Dorsolateral prefrontal cortex (tissue), 120 donors: ENCODE measurements at regions of chr4 and their contacts with region 1.

Region 1: DNA sequence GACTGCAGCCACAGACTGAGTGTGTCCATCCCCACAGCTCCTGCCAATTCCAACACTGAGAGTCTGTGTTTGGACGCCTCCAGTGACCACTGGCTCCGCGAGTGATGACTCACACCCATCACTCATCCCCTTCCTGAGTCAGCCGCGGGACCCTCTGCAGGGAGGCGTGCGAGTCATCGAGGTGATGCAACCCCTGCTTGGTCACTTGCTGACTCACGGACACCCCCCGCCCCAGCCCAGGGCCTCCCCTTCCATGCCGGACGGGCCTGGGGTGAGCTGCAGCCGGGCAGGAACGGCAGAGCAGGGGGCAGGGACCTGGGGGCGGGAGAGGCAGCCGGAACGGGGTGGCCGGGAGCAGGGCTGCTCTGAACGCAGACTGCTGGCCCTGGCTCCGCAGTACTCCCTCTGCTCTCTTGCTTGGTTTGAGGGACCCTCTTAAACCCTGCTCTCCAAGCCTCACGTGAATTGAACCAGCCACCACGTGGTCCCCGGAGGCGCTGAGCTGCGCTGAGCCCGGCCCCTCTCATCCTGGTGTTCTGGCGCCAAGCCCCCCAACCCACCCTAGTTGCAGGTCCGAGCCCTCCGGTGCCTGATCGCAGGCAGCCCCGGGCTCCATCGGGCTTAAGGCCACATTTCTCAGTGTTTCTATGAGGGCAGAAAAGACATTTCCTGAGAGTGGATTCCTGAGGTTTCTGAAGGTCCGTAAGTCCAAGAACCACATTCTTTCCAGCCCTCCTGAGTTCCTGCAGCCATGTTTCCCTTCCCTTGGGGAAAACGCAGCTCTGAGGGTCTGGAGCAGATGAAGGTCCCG is 32.4 kb downstream of the FGFRL1 start:
- DNase-seq: peak in 9 of 10 donors; percentile 55 to 95 (median 77)
- H3K4me3 ChIP-seq: peak overlapping the region in 15 of 59 donors; percentile 6 to 42 (median 20)
- H3K27ac ChIP-seq: peak overlapping the region in 14 of 59 donors; percentile 6 to 75 (median 49)
- H3K27me3 ChIP-seq: peaks cover 0 to 20% (median 0%) of the 10 kb centered on the region in 45 donors
- CTCF ChIP-seq: peak in 3 of 56 donors; percentile 14 to 28 (median 19)

Region 2: GRCh38 chr4:1192091-1192492 is 148.2 kb after region 1 on chr4:
- intact Hi-C with region 1: loop called in 1 of 2 experiments (anchors 10 kb)
- DNase-seq: peak; percentile 55 to 93 (median 88)
- H3K4me3 ChIP-seq: peak overlapping the region in 13 of 59 donors; percentile 3 to 43 (median 19)
- H3K27ac ChIP-seq: peak overlapping the region in 57 of 59 donors; percentile 7 to 91 (median 74)
- H3K27me3 ChIP-seq: no peaks in the 10 kb centered on the region
- CTCF ChIP-seq: peak in 15 of 56 donors; percentile 7 to 47 (median 25)